ENCODE measurements at regions of chr11 and their contacts with region 1.

Region 1: DNA sequence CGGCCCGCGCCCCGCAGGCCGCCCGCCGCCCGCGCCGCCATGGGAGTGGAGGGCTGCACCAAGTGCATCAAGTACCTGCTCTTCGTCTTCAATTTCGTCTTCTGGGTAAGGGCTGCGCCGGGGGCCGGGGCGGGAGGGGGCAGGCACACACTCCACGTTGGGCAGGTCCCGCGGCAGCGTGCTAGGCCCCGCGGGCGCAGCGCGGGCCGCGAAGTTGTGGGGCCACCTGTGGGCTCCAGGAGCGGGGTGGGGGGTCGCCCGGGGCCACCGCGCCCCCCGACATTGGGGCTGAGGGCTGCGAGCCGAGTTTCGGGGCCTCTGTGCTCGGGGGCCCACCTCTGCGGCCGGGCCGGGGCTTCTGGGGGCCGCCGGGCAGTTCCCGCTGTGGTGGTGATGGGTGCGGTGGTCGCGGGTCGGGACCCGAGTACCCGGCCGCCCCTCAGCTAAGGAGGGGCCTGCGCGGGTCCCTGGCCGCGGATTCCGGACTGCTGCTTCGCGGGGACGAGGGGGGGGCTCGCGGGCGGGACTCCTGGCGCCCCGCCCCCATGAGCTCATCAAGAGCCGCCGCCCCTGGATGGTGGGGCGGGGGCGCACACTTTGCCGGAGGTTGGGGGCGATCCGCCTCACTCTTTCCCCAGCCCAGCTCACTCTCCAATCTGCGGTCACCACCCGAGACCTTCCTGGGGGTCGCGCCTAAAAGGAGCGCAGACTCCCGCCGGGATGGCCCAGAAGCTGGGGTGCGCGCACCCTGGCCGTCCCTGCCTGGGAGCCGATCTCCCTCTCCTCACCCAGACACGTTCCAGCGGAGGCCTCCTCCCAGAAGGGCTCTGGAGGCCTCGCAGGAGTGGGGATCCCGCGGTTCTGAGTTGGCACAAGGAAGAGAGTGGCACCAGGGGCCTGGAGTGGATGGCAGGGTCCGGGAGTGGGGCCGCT is 667 bp downstream of the CD81 start:
- DNase-seq: peak; percentile 37 to 41
- ATAC-seq: peak; percentile 25 to 59; a peak in 5 of 6 replicates
- H3K4me3 ChIP-seq: peak overlapping the region; percentile 100
- H3K27ac ChIP-seq: peak overlapping the region; percentile 92 to 98
- H3K4me1 ChIP-seq: peaks cover 39% of the 10 kb centered on the region
- CTCF ChIP-seq: no peak
- EP300 ChIP-seq: no peak
- POLR2A ChIP-seq: no peak
- RAD21 ChIP-seq: no peak

Region 2: GRCh38 chr11:2366261-2366660 is 11.5 kb before region 1 on chr11:
- CTCF ChIA-PET with region 1: interaction called, 6 read pairs
- POLR2A ChIA-PET with region 1: interaction called, 10 read pairs
- DNase-seq: no peak
- ATAC-seq: no peak
- H3K4me3 ChIP-seq: no peak overlapping the region
- H3K27ac ChIP-seq: no peak overlapping the region
- H3K4me1 ChIP-seq: no peaks in the 10 kb centered on the region
- CTCF ChIP-seq: no peak
- EP300 ChIP-seq: no peak
- POLR2A ChIP-seq: no peak
- RAD21 ChIP-seq: no peak

Region 3: DNA sequence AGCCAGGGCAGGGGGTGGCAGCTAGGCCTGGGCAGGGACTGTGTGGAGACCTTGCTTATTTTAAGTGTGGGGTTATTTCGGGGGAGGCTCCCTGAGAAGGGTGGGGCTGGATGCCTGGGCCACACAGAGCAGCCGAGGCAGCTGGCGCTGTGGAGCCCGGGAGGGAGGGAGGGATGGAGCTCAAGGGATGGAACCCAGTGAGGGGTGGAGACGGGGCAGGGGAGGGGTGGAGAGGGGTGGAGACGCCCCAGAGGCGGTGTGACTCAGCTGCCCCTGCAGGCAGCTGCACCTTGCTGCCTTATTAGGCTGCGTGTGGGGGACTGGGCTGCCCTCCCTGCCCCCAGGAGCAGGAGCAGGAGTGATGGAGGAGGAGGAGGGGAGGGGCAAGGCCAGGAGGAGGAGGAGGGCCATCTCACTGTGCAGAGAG is 13.0 kb after region 1 on chr11:
- CTCF ChIA-PET with region 1: interaction called, 3 read pairs
- POLR2A ChIA-PET with region 1: interaction called, 18 read pairs
- DNase-seq: peak; percentile 31 to 44
- ATAC-seq: peak; percentile 17 to 60; a peak in 4 of 6 replicates
- H3K4me3 ChIP-seq: no peak overlapping the region
- H3K27ac ChIP-seq: peak overlapping the region; percentile 42 to 70; a peak in 4 of 6 replicates
- H3K4me1 ChIP-seq: peaks cover 24% of the 10 kb centered on the region
- CTCF ChIP-seq: no peak
- EP300 ChIP-seq: no peak
- POLR2A ChIP-seq: no peak
- RAD21 ChIP-seq: no peak

Region 4: GRCh38 chr11:2400069-2400760 is 22.4 kb after region 1 on chr11 and contains the start of gene TSSC4:
- CTCF ChIA-PET with region 1: interaction called, 17 read pairs
- POLR2A ChIA-PET with region 1: interaction called, 26 read pairs
- DNase-seq: peak; percentile 99 to 100
- ATAC-seq: peak; percentile 86 to 93
- H3K4me3 ChIP-seq: peak within 1 kb of the TSS; percentile 100
- H3K27ac ChIP-seq: peak within 1 kb of the TSS; percentile 97 to 98
- H3K4me1 ChIP-seq: peaks cover 16% of the 10 kb centered on the region
- CTCF ChIP-seq: peak; percentile 91
- EP300 ChIP-seq: no peak
- POLR2A ChIP-seq: peak; percentile 89
- RAD21 ChIP-seq: peak; percentile 60 to 66
- polyA plus RNA-seq, gene TSSC4: 21.8 and 22.2 TPM in 2 replicates